ENCODE measurements at regions of chr6 and their contacts with region 1.

Region 1: DNA sequence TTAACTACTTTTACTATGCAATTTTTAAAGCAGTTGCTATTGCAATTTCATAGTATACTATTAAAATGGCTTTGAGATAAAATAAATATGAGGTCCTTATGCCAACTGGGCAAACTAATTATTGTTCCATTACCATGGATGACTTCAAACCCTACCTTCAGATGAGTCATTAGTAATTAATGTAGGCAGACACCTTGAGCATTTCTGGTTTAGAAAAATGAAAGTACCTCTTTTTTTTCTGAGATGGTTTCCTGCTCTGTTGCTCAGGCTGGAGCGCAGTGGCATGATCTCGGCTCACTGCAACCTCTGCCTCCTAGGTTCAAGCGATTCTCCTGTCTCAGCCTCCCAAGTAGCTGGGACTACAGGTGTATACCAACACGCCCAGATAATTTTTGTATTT is 11.9 kb downstream of the ASF1A start:
- DNase-seq: no peak
- H3K4me3 ChIP-seq: no peak overlapping the region
- H3K27ac ChIP-seq: no peak overlapping the region
- H3K4me1 ChIP-seq: no peaks in the 10 kb centered on the region
- H3K27me3 ChIP-seq: no peaks in the 10 kb centered on the region

Region 2: GRCh38 chr6:118856301-118856700 is 49.5 kb before region 1 on chr6:
- CTCF ChIA-PET with region 1: no interaction called
- POLR2A ChIA-PET with region 1: no interaction called
- DNase-seq: no peak
- H3K4me3 ChIP-seq: no peak overlapping the region
- H3K27ac ChIP-seq: no peak overlapping the region
- H3K4me1 ChIP-seq: peaks cover 0 to 7% (median 1%) of the 10 kb centered on the region in 4 experiments
- H3K27me3 ChIP-seq: no peaks in the 10 kb centered on the region

Region 3: DNA sequence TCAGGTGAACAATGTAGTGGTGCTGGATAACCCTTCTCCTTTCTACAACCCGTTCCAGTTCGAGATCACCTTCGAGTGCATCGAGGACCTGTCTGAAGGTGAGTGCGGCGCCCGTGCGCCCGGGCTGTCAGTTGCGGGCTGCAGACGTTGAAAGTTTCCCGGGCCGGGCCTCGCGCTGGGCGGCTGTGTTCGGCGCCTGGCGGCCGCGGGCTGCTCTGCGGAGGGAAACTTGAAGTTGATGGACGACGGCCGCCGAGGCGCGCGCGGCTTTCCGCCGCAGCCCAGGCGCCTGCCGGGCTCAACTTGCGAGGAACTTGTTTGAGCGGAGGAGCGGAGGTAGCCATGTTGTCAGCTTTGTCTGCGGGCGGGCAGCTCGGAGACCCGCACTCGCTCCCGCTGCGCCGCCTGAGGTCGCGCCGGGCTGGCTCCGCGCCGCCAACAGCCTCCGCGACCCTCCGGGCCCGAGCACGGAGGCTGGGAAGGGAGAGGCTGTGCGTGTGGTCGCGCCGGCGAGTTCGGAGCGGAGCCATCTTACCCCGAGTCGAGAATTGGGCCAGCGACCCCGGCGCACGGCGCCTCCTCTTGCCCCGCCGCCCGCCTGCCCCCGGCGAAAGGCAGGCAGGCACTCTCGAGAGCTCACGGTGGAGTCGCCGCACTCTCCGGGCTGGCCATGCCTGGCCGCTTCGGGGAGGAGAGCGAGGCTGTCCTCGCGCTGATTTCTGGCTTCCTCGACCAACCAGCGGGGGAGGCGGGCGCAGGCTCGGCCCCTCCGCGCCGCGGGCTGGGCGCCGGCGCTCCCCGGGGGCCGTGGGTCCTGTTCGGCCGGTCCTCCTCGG is 11.2 kb before region 1 on chr6:
- CTCF ChIA-PET with region 1: interaction called, 13 read pairs
- POLR2A ChIA-PET with region 1: no interaction called
- DNase-seq: peak; percentile 84 to 92 (median 91)
- H3K4me3 ChIP-seq: peak overlapping the region; percentile 89 to 99 (median 97)
- H3K27ac ChIP-seq: peak overlapping the region; percentile 75 to 94
- H3K4me1 ChIP-seq: peaks cover 17 to 51% (median 21%) of the 10 kb centered on the region in 4 experiments
- H3K27me3 ChIP-seq: no peaks in the 10 kb centered on the region

Region 4: DNA sequence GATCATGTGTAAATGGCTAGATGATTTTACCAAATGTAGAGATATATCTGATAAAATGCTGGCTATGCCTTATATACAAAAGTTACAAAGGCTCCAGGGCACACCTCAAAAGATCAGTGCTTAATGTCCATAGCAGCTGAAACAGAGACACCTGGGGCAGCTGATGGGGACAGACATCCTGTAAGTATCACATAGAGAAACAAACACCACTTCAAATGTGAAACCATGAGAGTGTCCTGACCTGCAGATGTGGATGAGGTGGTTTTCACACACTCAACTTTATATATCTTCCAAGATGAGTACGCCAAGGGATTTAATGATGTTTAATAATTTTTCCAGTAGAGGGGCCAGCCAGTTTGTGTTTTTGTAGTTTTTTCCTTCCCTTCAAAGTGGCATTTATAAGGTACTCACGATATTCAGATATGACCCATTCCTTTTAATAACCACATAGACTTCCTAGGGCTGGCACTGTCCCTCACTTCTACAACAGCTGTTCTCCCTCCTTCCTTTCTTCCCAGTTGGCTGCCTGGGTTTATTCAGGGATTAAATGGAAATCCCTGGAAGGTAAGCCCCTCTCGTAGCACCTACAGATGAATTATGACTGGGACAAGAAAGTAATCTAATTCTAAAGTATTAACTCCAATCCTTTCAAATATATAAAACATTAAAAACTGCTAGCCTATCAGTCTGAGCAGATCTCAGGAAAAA is 79.4 kb after region 1 on chr6:
- CTCF ChIA-PET with region 1: no interaction called
- POLR2A ChIA-PET with region 1: no interaction called
- DNase-seq: no peak
- H3K4me3 ChIP-seq: no peak overlapping the region
- H3K27ac ChIP-seq: no peak overlapping the region
- H3K4me1 ChIP-seq: no peaks in the 10 kb centered on the region
- H3K27me3 ChIP-seq: no peaks in the 10 kb centered on the region

Measured in common myeloid progenitor, CD34-positive (primary cell).